Cardiac septum (tissue), 1 donor: ENCODE measurements at regions of chr3 and their contacts with region 1.

Region 1: DNA sequence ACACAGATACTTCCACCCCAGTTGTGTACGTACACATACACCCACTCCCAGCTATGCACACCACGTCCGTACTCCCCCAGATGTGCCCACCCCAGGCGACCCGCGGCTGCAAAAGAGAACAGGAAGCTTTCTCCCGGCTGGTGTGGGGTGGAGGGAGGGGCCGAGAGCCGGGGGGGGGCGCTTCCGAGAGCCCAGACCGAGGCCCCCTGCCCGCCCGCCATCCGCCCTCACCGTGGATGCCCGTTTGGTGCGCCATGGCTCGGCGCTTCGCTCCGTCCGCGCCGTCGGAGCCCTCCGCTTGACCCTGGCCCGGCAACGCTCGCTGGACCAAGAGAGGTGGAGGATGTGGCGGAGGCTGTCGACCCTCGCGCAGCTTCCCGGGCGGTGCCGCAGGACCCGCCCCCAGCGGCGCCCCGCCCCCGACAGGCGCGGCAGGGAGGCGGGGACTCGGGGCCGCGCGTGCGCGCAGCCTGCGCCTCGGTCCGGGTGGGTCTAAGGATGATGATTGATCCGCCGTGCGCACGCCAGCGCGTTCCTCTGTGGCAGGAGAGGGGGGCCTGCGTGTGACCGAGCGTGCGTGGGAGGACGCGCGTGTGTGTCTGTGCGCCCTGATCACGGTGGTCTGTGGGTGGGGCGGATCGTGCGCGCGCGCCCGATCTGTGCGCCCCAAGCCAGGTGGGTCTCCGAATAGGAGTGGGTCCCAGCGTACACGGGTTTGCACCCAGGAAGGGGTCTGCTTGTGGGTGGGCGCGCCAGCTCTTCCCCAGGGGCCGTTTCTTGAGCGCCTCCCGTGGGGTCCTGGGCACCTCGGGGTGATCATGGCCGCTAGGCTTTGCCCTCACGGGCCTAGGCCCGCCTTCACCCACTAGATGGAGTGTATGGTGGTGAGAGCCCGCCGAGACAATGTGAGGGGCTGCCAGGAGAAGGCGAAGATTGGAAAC is at the start of gene TWF2:
- DNase-seq: peak; percentile 93
- total RNA-seq, gene TWF2: 69.5 TPM

Region 2: GRCh38 chr3:52022323-52023100 is 216.5 kb before region 1 on chr3:
- intact Hi-C with region 1: loop called (anchors 5 kb)
- DNase-seq: no peak

Region 3: DNA sequence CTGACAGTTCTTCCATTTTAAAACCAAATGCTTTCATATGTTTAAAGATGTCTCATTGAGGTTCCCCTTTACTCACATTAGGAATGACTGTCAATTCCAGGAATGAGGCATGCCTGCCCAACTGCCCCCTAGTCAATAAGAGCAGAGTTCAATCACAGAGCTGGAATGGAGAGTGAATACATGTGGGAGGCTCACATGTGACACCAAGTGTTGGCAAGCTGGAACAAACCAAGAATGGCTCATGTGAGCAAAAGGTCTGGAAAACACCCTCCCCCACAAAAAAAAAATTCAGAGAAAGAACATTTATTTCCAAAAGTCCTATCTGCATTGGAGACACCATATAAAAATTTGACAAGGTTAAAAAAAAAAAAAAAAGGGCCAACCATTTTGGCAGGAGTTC is 443.0 kb after region 1 on chr3:
- intact Hi-C with region 1: no loop called
- DNase-seq: no peak